Activated CD4-positive, alpha-beta memory T cell treated with anti-CD3 and anti-CD28 coated beads for 36 hours (primary cell): ENCODE measurements at regions of chr10 and their contacts with region 1.

Region 1: DNA sequence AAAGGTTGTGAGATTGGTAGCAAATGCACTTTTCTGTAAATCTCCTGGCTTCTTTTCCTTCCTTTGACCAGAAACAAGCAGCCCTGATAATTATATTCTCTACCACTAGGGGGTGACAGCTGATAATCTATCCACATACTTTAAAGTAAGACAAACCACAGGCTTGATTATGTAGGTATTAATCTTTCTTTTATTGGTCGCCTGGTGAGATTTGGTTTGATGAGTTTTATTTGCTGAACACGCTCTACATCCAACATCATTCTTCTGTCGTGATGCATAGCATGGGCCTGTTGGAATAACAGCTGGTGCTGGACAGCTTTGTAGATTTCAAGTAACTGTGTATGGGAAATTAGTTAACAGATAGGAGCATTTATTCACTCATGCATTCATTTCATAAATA is 63.5 kb downstream of the ZNF365 start:
- DNase-seq: no peak
- H3K4me3 Mint-ChIP-seq: no peak overlapping the region
- H3K27ac Mint-ChIP-seq: no peak overlapping the region
- H3K4me1 Mint-ChIP-seq: peaks cover 20% of the 10 kb centered on the region
- H3K27me3 Mint-ChIP-seq: peaks cover 3% of the 10 kb centered on the region

Region 2: GRCh38 chr10:62268399-62269114 is 169.1 kb before region 1 on chr10 and contains the start of gene RTKN2:
- CTCF ChIA-PET with region 1: interaction called, 17 read pairs
- POLR2A ChIA-PET with region 1: interaction called, 4 read pairs
- intact Hi-C with region 1: no loop called
- DNase-seq: peak; percentile 83
- H3K4me3 Mint-ChIP-seq: peak within 1 kb of the TSS; percentile 80
- H3K27ac Mint-ChIP-seq: no peak within 1 kb of the TSS
- H3K4me1 Mint-ChIP-seq: peaks cover 28% of the 10 kb centered on the region
- H3K27me3 Mint-ChIP-seq: peaks cover 7% of the 10 kb centered on the region
- total RNA-seq, gene RTKN2: 5.1 to 5.9 TPM

Region 3: DNA sequence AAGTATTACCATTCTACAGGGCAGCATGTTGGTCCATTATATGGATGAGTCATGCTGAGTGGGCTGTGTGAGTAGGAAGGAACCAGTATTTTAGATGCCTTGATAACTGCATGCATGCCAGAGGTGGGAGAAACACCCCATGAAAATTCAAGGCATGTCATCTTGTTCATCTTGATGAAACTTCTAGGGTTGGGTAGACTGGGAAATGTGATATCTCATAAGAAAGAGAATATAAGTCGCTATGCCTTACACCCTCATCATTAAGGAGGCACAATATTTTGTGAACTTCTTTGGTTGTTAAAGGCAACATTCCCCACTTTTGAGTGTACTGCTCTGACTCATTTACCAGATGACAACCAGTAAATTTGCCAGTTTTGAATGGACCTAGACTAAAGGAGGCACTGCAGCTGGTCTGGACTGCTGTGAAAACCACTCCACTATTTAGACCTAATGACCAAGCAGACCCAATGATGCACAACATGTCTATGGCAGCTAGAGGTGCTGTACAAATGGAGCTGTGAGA is 15.6 kb before region 1 on chr10:
- CTCF ChIA-PET with region 1: interaction called, 11 read pairs
- POLR2A ChIA-PET with region 1: no interaction called
- intact Hi-C with region 1: no loop called
- DNase-seq: no peak
- H3K4me3 Mint-ChIP-seq: no peak overlapping the region
- H3K27ac Mint-ChIP-seq: no peak overlapping the region
- H3K4me1 Mint-ChIP-seq: peaks cover 29% of the 10 kb centered on the region
- H3K27me3 Mint-ChIP-seq: peaks cover 2% of the 10 kb centered on the region

Region 4: DNA sequence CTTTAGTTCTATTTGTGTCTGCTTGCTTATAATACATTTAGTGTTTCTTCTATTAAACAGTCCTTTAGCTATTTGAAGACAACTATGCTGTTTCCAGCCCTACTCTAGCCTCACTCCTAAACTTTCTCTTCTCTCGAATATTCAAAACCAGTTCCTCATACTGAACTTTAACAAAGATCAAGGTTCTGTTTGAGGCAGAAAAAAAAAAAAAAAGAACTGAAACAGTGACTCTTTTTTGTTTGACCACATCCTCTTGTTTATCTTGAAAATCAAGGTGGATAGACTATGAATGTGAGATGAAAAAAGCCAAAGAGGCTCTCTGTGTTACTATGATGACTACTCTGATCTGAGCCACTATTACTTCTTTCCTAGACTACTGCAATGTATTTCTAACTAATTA is 90.7 kb after region 1 on chr10:
- CTCF ChIA-PET with region 1: interaction called, 3 read pairs
- POLR2A ChIA-PET with region 1: no interaction called
- intact Hi-C with region 1: loop called (anchors 2 kb)
- DNase-seq: no peak
- H3K4me3 Mint-ChIP-seq: no peak overlapping the region
- H3K27ac Mint-ChIP-seq: peak overlapping the region; percentile 15
- H3K4me1 Mint-ChIP-seq: peaks cover 33% of the 10 kb centered on the region
- H3K27me3 Mint-ChIP-seq: peaks cover 11% of the 10 kb centered on the region

Region 5: GRCh38 chr10:62594093-62594520 is 156.4 kb after region 1 on chr10:
- CTCF ChIA-PET with region 1: interaction called, 9 read pairs
- POLR2A ChIA-PET with region 1: no interaction called
- intact Hi-C with region 1: loop called (anchors 1 kb)
- DNase-seq: peak; percentile 64
- H3K4me3 Mint-ChIP-seq: no peak overlapping the region
- H3K27ac Mint-ChIP-seq: no peak overlapping the region
- H3K4me1 Mint-ChIP-seq: peaks cover 2% of the 10 kb centered on the region
- H3K27me3 Mint-ChIP-seq: peaks cover 2% of the 10 kb centered on the region

Region 6: GRCh38 chr10:63083904-63084689 is 646.4 kb after region 1 on chr10:
- CTCF ChIA-PET with region 1: interaction called, 3 read pairs
- POLR2A ChIA-PET with region 1: no interaction called
- intact Hi-C with region 1: loop called (anchors 5 kb)
- DNase-seq: peak; percentile 51
- H3K4me3 Mint-ChIP-seq: no peak overlapping the region
- H3K27ac Mint-ChIP-seq: no peak overlapping the region
- H3K4me1 Mint-ChIP-seq: peaks cover 2% of the 10 kb centered on the region
- H3K27me3 Mint-ChIP-seq: peaks cover 8% of the 10 kb centered on the region